Sciatic nerve (tissue), 2 donors: ENCODE measurements at regions of chr11 and their contacts with region 1.

Region 1: GRCh38 chr11:83933008-83933407 is 646.8 kb upstream of the CCDC90B start:
- DNase-seq: no peak
- ATAC-seq: no peak

Region 2: DNA sequence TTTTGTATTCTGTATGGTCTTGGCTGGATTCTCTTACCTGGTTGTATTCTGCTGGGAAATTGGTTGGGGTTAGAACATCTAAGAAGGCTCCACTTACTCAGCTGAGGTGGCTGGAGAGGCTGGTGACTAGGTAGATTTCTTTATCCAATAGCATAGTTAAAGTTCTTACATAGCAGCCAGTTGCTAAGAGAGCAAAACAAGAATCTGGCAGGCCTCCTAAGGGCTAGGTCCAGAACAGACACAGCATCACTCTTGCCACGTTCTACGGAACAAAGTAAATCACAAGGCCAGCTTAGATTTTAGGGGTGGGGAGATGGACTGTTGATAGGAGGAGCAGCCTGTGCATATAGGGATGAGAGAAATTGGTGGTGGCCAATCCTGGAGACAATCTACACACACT is 505.5 kb before region 1 on chr11:
- intact Hi-C with region 1: no loop called
- DNase-seq: no peak
- ATAC-seq: no peak

Region 3: GRCh38 chr11:83871054-83871453 is 62.0 kb before region 1 on chr11:
- intact Hi-C with region 1: loop called (anchors 2 kb)
- DNase-seq: no peak
- ATAC-seq: no peak